HEK293T (cell line): ENCODE measurements at regions of chrX and their contacts with region 1.

Region 1: DNA sequence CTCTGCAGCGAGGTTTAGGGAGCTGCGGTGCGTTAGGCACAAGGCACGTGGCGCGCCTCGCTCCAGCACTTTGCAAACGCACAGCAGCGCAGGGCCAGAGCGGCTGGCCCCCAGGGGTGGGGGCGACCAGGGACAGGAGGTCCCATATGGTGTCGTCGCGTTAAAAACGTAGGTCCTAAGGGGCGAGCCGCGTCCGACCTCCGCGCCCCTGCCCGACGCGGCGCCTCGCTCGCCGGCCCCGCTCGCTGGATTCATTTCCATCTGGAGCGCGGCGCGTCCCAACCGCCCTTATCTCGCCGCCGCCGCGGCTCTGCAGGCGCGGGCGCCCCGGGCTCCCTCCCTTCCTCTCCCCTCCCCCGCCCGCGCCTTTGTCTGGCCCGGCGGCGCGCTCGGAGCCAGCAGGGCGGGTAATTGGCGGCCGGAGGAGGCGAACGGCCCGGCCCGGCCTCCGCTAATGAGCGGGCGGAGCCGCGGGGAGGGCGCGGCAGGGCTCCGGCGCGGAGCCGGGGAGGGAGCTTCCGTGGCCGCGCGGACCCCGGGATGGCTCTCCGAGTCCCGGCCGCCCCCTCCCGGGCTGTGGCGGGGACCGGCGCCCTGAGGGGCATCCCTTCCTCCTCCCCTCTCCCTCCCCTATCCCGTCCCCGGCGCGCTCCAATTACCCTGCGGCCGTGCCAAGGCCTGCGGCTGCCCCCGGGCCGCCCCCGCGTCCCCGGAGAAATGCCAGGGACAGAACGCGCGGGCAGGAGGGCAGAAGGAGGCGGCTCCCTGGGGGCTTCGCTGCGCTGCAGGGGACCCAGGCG is 409.0 kb downstream of the BCOR start:
- DNase-seq: peak; percentile 61

Region 2: GRCh38 chrX:39527025-39527424 is 161.8 kb before region 1 on chrX:
- CTCF ChIA-PET with region 1: no interaction called
- POLR2A ChIA-PET with region 1: no interaction called
- DNase-seq: no peak

Region 3: GRCh38 chrX:39661116-39661907 is 27.5 kb before region 1 on chrX:
- CTCF ChIA-PET with region 1: no interaction called
- POLR2A ChIA-PET with region 1: no interaction called
- DNase-seq: no peak

Region 4: DNA sequence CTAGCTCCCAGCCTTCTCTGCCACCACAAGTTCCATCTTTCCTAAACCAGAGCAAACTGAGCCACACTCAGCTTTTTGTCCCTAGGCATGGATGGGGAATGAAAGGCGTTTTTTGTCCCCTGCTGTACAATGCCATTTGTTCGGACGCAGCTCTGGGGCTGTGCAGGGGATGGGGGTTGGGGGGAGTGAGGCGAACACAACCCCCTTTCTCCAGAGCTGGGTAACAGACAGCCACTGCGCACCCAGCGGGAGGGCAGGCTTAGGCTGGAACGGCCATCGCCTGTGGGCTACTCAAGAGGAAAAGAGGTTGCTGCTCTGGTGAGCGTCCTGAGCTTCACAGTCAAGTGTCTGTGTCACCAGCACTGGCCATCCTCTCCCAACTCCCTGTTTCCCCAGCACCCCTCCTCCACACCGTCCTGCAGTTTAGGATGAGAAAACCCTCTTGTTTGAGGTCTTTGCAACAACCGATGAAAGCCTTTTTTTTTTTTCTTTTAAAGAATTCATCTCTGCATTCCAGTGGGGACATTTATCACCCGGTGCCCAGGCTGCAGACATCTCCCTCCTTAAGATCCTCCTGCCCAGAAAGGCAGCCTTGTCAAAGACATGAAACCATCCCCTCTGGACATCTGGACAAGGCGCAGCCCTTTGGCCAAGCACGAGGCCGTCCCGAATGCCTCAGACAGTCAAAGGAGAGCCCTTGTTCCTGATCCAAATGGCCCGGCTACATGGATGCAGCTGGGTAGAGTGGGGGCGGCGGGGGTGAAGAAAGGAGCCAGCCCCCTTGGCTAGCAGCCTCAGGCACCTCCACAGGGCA is 10.6 kb before region 1 on chrX:
- CTCF ChIA-PET with region 1: interaction called, 3 read pairs
- POLR2A ChIA-PET with region 1: interaction called, 13 read pairs
- DNase-seq: no peak

Region 5: GRCh38 chrX:39874202-39874816 is 185.5 kb after region 1 on chrX:
- CTCF ChIA-PET with region 1: no interaction called
- POLR2A ChIA-PET with region 1: no interaction called
- DNase-seq: no peak